ENCODE measurements at regions of chr7 and their contacts with region 1.

Region 1: GRCh38 chr7:130242198-130243014 is 24.3 kb upstream of the CPA2 start:
- DNase-seq: peak; percentile 17
- ATAC-seq: peak; percentile 99
- H3K4me3 ChIP-seq: no peak overlapping the region
- H3K27ac ChIP-seq: no peak overlapping the region
- H3K4me1 ChIP-seq: no peaks in the 10 kb centered on the region
- H3K27me3 ChIP-seq: no peaks in the 10 kb centered on the region
- CTCF ChIP-seq: peak; percentile 77 to 94 (median 85)
- EP300 ChIP-seq: no peak
- POLR2A ChIP-seq: no peak
- RAD21 ChIP-seq: peak; percentile 96

Region 2: DNA sequence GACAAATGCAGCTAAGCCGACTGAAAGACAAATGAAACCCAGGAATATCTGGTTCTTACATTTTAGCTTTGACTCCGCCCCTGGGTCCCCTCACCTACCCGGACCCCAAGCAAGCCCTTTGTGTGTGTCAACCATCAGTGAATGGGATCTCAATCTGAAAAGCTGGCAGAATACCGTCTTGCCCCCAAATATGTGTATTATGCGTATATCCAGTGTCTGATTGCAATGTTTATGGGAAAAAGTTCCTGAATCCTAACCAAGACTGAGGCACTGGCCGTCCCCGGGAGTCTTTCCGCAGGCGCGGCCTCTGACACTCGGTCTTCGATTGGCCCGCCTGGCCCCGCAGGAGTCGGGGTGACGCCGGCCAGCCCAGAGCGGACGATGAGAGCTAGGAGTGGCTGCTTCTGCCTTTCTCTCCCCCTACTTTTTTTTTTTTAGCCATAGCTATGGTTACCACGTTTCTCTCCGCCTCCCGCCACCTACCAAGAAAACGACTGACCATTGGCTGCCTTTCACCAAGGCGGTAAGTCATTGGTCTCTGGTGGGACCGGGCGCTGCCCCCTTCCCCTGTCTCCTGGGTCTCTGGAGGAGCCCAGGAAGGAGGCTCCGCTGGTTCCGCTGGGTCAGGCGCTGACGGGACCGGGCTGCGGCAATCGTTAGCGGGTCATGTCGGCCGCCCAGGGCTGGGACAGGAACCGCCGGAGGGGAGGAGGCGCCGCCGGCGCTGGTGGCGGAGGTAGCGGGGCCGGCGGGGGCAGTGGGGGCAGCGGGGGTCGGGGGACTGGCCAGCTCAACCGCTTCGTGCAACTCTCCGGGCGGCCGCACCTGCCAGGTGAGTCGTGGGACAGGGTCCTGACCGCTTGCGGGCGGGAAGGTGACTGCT is 172.2 kb before region 1 on chr7 and contains the start of gene KLHDC10:
- CTCF ChIA-PET with region 1: interaction called, 14 read pairs
- POLR2A ChIA-PET with region 1: no interaction called
- RAD21 ChIA-PET with region 1: interaction called, 10 read pairs
- SMC1A ChIA-PET with region 1: interaction called, 13 read pairs
- in situ Hi-C with region 1: no loop called
- intact Hi-C with region 1: loop called (anchors 1 kb)
- DNase-seq: peak; percentile 97
- ATAC-seq: peak; percentile 97
- H3K4me3 ChIP-seq: peak within 1 kb of the TSS; percentile 99
- H3K27ac ChIP-seq: peak within 1 kb of the TSS; percentile 45; the same call in 1 of the 2 replicates
- H3K4me1 ChIP-seq: no peaks in the 10 kb centered on the region
- H3K27me3 ChIP-seq: no peaks in the 10 kb centered on the region
- CTCF ChIP-seq: no peak
- EP300 ChIP-seq: peak in 1 of 2 experiments; percentile 28; a peak in 1 of 4 replicates
- POLR2A ChIP-seq: peak; percentile 74
- RAD21 ChIP-seq: no peak
- polyA plus RNA-seq, gene KLHDC10: 2.9 to 3.2 TPM

Region 3: GRCh38 chr7:130286881-130287280 is 44.5 kb after region 1 on chr7:
- CTCF ChIA-PET with region 1: no interaction called
- POLR2A ChIA-PET with region 1: no interaction called
- RAD21 ChIA-PET with region 1: no interaction called
- SMC1A ChIA-PET with region 1: no interaction called
- in situ Hi-C with region 1: no loop called
- intact Hi-C with region 1: no loop called
- DNase-seq: no peak
- ATAC-seq: no peak
- H3K4me3 ChIP-seq: no peak overlapping the region
- H3K27ac ChIP-seq: no peak overlapping the region
- H3K4me1 ChIP-seq: no peaks in the 10 kb centered on the region
- H3K27me3 ChIP-seq: 0 out of 4 replicates have a peak, but pooled peaks cover 0 to under 1% of the 10 kb centered on the region in 2 experiments
- CTCF ChIP-seq: no peak
- EP300 ChIP-seq: no peak
- POLR2A ChIP-seq: no peak
- RAD21 ChIP-seq: no peak

Region 4: DNA sequence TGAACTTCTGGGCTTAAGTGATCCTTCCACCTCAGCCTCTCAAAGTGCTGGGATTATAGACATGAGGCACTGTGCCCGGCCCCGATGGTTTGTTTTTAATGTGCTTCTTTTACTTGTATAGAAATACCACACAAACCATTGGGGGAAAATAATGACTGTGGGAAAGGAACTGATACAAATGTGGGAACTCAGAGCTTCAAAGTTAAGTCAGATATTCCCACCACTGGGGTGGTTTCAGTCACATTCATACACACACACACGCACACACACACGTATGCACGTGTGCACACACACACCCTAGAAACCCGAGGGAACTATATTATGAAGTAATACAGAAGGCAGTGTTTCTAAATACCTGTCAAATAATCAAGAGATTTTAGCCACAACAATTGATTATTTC is 67.6 kb after region 1 on chr7:
- CTCF ChIA-PET with region 1: no interaction called
- POLR2A ChIA-PET with region 1: no interaction called
- RAD21 ChIA-PET with region 1: no interaction called
- SMC1A ChIA-PET with region 1: interaction called, 3 read pairs
- in situ Hi-C with region 1: no loop called
- intact Hi-C with region 1: loop called (anchors 5 kb)
- DNase-seq: peak; percentile 79
- ATAC-seq: peak; percentile 80
- H3K4me3 ChIP-seq: no peak overlapping the region
- H3K27ac ChIP-seq: no peak overlapping the region
- H3K4me1 ChIP-seq: no peaks in the 10 kb centered on the region
- H3K27me3 ChIP-seq: no peaks in the 10 kb centered on the region
- CTCF ChIP-seq: no peak
- EP300 ChIP-seq: no peak; a peak in 1 of 4 replicates
- POLR2A ChIP-seq: no peak
- RAD21 ChIP-seq: 0 out of 2 replicates have a peak, but pooled peaks have one; percentile 3

Region 5: DNA sequence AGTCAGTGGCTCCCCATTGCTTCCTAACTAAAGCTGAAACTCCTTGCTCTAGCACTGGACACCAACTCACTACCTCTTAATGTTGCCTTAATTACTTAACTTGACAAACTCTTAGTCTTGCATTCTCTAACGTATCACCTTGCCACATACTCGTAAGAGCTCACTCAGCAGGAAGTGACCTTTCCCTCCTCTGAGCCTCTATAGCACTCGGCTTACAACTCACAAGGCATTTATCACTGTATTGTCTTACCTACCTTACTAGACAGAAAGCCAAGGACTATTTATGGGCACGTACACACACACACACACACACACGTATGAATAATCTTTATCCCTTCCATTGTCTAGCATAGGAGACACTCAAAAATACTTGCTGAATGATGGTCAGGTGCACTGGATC is 177.3 kb after region 1 on chr7:
- CTCF ChIA-PET with region 1: no interaction called
- POLR2A ChIA-PET with region 1: no interaction called
- RAD21 ChIA-PET with region 1: no interaction called
- SMC1A ChIA-PET with region 1: no interaction called
- in situ Hi-C with region 1: no loop called
- intact Hi-C with region 1: loop called (anchors 5 kb)
- DNase-seq: no peak
- ATAC-seq: no peak
- H3K4me3 ChIP-seq: no peak overlapping the region
- H3K27ac ChIP-seq: no peak overlapping the region
- H3K4me1 ChIP-seq: no peaks in the 10 kb centered on the region
- H3K27me3 ChIP-seq: no peaks in the 10 kb centered on the region
- CTCF ChIP-seq: no peak
- EP300 ChIP-seq: no peak
- POLR2A ChIP-seq: no peak
- RAD21 ChIP-seq: no peak

Region 6: DNA sequence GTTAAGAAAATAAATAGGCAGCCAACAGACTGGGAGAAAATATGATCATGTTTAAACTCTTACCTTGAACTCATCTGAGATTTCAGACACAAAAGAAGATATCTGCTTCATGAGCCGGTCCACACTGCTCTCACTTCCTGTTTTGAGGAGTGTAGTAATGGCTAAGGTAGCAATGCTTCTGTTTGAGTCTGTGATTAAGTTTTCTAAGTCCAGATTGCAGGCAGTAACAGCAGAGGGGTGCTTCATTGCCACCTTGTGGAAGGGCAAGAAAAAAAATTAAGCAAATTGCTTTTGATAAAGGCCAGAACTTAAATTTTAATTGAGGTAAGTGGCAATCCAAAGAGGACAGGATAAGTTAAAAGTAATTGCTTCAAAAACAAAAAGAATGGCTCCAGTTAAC is 318.6 kb after region 1 on chr7:
- CTCF ChIA-PET with region 1: interaction called, 3 read pairs
- POLR2A ChIA-PET with region 1: no interaction called
- RAD21 ChIA-PET with region 1: no interaction called
- SMC1A ChIA-PET with region 1: interaction called, 4 read pairs
- in situ Hi-C with region 1: no loop called
- intact Hi-C with region 1: loop called (anchors 1 kb)
- DNase-seq: peak; percentile 40
- ATAC-seq: peak; percentile 100
- H3K4me3 ChIP-seq: no peak overlapping the region
- H3K27ac ChIP-seq: no peak overlapping the region
- H3K4me1 ChIP-seq: no peaks in the 10 kb centered on the region
- H3K27me3 ChIP-seq: no peaks in the 10 kb centered on the region
- CTCF ChIP-seq: peak; percentile 33 to 41 (median 39); a peak in 5 of 6 replicates
- EP300 ChIP-seq: no peak
- POLR2A ChIP-seq: no peak
- RAD21 ChIP-seq: peak; percentile 73

Region 7: GRCh38 chr7:130758429-130759056 is 516.1 kb after region 1 on chr7:
- CTCF ChIA-PET with region 1: interaction called, 62 read pairs
- POLR2A ChIA-PET with region 1: no interaction called
- RAD21 ChIA-PET with region 1: interaction called, 32 read pairs
- SMC1A ChIA-PET with region 1: interaction called, 16 read pairs
- in situ Hi-C with region 1: no loop called
- intact Hi-C with region 1: loop called (anchors 1 kb)
- DNase-seq: no peak
- ATAC-seq: peak; percentile 63
- H3K4me3 ChIP-seq: no peak overlapping the region
- H3K27ac ChIP-seq: no peak overlapping the region
- H3K4me1 ChIP-seq: no peaks in the 10 kb centered on the region
- H3K27me3 ChIP-seq: no peaks in the 10 kb centered on the region; a peak in 1 of 4 replicates
- CTCF ChIP-seq: peak; percentile 41 to 59 (median 48)
- EP300 ChIP-seq: no peak
- POLR2A ChIP-seq: no peak
- RAD21 ChIP-seq: peak; percentile 92

Measured in GM12878 (cell line).